ENCODE measurements at regions of chr15 and their contacts with region 1.

Region 1: GRCh38 chr15:31128919-31129768 is 27.6 kb upstream of the TRPM1 start:
- DNase-seq: peak; percentile 41
- ATAC-seq: peak; percentile 89
- H3K4me3 ChIP-seq: 0 out of 4 replicates have a peak overlapping the region, but pooled peaks of 1 of the 2 experiments have one; percentile 8
- H3K27ac ChIP-seq: no peak overlapping the region
- H3K4me1 ChIP-seq: no peaks in the 10 kb centered on the region
- H3K27me3 ChIP-seq: no peaks in the 10 kb centered on the region
- CTCF ChIP-seq: peak; percentile 97

Region 2: DNA sequence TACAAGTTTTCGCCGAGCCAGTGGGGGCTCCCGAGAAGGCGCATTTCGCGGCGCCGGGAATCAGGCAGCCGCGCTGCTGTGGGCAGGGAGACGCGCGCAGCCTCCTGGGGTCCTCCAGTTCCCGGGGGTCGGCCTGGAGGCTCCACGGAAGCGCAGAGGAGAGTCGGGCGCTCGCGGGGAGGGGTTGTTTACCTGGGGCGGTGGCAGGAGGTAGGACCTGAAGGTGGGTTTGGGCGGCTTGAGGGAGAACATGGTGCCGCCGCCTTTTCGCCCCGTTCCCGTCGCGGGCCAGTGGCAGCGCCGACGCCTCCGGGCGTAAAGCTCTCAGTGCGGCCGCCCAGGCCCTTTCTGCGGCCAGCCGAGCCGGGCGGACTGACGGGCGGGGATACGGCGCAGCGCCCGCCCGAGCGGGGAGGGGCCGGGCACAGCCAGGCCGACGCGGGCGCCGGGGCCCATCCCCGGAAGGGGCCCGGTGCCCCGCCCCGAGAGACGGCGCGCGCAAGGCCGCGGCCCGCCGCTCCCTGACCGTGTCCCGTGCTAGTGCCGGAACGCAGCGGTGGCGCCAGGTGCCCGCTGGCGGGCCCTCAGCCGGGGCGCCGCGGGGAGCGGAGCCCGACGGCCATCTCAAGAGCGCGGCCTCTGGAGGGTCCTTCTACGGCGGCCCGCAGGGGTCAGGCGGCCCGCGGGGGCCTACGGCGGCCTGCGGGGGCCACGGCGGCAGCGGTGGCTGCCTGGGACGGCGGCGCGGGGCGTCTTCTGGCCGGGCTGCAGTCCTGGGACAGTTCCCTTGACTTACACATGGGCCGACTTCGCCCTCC is 137.7 kb before region 1 on chr15 and contains the start of gene MTMR10:
- CTCF ChIA-PET with region 1: no interaction called
- POLR2A ChIA-PET with region 1: no interaction called
- in situ Hi-C with region 1: no loop called
- intact Hi-C with region 1: loop called (anchors 5 kb)
- DNase-seq: no peak
- ATAC-seq: peak; percentile 97
- H3K4me3 ChIP-seq: peak within 1 kb of the TSS; percentile 74 to 90
- H3K27ac ChIP-seq: peak within 1 kb of the TSS; percentile 83
- H3K4me1 ChIP-seq: peaks cover 11% of the 10 kb centered on the region; the same call in 1 of the 2 replicates
- H3K27me3 ChIP-seq: no peaks in the 10 kb centered on the region
- CTCF ChIP-seq: no peak
- total RNA-seq, gene MTMR10: 19.5 TPM

Region 3: DNA sequence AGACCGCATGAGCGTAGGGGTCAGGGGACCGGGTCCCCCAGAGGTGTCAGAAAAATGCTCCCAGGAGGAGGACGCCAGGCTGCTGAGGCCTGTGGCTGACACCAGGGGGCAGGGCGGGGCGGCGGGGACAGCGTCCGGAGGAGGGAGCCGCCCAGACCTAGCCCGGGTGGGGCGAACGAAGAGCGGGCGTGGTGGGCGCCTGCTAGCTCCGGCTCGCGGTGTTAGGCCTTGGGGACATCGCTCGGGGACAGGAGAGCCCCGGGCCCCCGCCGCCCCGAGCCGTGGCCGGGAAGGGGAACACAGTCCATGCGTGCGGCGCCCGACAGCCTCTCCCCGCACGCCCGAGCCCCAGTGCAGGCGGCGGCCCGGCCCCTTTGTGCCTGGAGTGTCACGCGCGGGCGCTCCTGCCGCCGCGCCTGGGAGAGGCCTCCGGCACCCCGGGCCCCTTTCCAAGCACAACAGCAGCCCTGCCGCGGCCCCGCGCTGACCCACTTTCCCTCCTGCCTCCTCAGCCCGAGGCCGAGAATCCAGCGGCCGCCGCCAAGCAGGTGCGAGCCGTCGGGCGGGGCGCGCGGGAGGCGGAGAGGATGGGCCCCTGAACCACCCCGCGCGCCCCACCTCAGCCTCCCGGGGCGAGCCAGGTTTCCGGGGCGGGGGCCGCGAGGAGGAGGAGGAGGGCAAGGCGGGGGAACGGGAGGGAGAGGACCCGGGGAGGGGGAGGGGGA is 86.5 kb after region 1 on chr15:
- CTCF ChIA-PET with region 1: interaction called, 11 read pairs
- POLR2A ChIA-PET with region 1: no interaction called
- in situ Hi-C with region 1: no loop called
- intact Hi-C with region 1: no loop called
- DNase-seq: no peak
- ATAC-seq: peak; percentile 93
- H3K4me3 ChIP-seq: peak overlapping the region; percentile 49 to 55
- H3K27ac ChIP-seq: peak overlapping the region; percentile 60
- H3K4me1 ChIP-seq: peaks cover 26% of the 10 kb centered on the region
- H3K27me3 ChIP-seq: no peaks in the 10 kb centered on the region
- CTCF ChIP-seq: peak; percentile 95

Region 4: GRCh38 chr15:31458591-31459399 is 329.7 kb after region 1 on chr15:
- CTCF ChIA-PET with region 1: no interaction called
- POLR2A ChIA-PET with region 1: no interaction called
- in situ Hi-C with region 1: no loop called
- intact Hi-C with region 1: no loop called
- DNase-seq: no peak
- ATAC-seq: no peak
- H3K4me3 ChIP-seq: no peak overlapping the region
- H3K27ac ChIP-seq: no peak overlapping the region
- H3K4me1 ChIP-seq: no peaks in the 10 kb centered on the region
- H3K27me3 ChIP-seq: no peaks in the 10 kb centered on the region
- CTCF ChIP-seq: no peak